Naive thymus-derived CD8-positive, alpha-beta T cell (primary cell): ENCODE measurements at regions of chrX and their contacts with region 1.

Region 1: GRCh38 chrX:48696301-48697181 is at the start of gene SUV39H1:
- DNase-seq: peak; percentile 71 to 90 (median 83)
- ATAC-seq: peak; percentile 92 to 95
- H3K4me3 Mint-ChIP-seq: peak within 1 kb of the TSS; percentile 82 to 98 (median 90)
- H3K27ac Mint-ChIP-seq: peak within 1 kb of the TSS; percentile 94 to 98 (median 97)
- H3K4me1 Mint-ChIP-seq: peaks cover 14 to 29% (median 28%) of the 10 kb centered on the region in 4 donors
- H3K27me3 Mint-ChIP-seq: no peaks in the 10 kb centered on the region
- polyA plus RNA-seq, gene SUV39H1: 9.8 to 13.9 (median 10.2) TPM

Region 2: GRCh38 chrX:48493890-48494364 is 202.6 kb before region 1 on chrX:
- POLR2A ChIA-PET with region 1: no interaction called
- DNase-seq: no peak
- ATAC-seq: no peak
- H3K4me3 Mint-ChIP-seq: no peak overlapping the region
- H3K27ac Mint-ChIP-seq: no peak overlapping the region
- H3K4me1 Mint-ChIP-seq: no peaks in the 10 kb centered on the region
- H3K27me3 Mint-ChIP-seq: no peaks in the 10 kb centered on the region

Region 3: GRCh38 chrX:48648336-48648751 is 48.2 kb before region 1 on chrX:
- POLR2A ChIA-PET with region 1: no interaction called
- DNase-seq: peak in 9 of 10 donors; percentile 2 to 70 (median 30)
- ATAC-seq: peak; percentile 67 to 74
- H3K4me3 Mint-ChIP-seq: no peak overlapping the region
- H3K27ac Mint-ChIP-seq: peak overlapping the region in 3 of 10 donors; percentile 52 to 78 (median 65)
- H3K4me1 Mint-ChIP-seq: peaks cover 2 to 15% (median 7%) of the 10 kb centered on the region in 4 donors
- H3K27me3 Mint-ChIP-seq: no peaks in the 10 kb centered on the region

Region 4: GRCh38 chrX:48665991-48666390 is 30.6 kb before region 1 on chrX:
- POLR2A ChIA-PET with region 1: no interaction called
- DNase-seq: no peak
- ATAC-seq: no peak
- H3K4me3 Mint-ChIP-seq: no peak overlapping the region
- H3K27ac Mint-ChIP-seq: no peak overlapping the region
- H3K4me1 Mint-ChIP-seq: peaks cover 0 to 3% (median 1%) of the 10 kb centered on the region in 4 donors
- H3K27me3 Mint-ChIP-seq: no peaks in the 10 kb centered on the region

Region 5: DNA sequence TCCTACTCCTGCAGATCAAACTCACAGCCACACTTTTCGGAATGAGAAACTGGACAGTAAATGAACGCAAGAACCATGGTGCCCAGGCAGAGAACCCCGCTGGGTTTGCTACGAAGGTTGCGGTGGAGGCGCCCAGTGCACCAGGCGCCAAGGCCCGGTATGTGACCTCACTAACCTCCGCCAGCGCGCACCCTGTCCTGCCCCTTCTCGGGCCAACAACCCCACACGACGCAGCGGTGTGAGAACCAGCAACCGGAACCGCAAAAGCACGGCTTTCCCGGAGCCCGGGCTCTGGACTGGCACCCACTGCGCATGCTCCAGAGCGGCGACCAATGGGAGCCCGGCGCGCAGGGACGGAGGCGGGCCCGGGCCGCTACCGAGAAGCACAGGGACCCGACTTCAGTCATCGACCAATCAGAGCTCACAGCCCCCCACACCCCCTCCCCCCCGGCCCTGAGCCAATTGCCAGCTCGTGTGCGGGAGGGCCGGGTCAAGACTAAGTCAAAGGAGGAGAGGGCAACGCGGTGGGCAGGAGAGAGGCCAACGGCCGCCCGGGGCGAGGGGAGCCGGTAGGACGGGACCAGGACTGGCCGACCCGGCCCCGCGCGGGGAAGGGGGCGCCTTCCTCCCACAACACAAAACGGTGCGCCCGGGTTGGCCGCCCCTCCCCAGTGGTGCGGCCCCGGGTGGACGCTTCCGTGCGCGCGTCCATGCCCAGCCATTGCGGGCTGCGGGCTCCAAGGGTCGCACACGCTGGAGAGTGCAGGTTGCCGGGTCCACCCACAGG is 20.2 kb before region 1 on chrX:
- POLR2A ChIA-PET with region 1: interaction called, 12 read pairs
- DNase-seq: peak; percentile 80 to 93 (median 84)
- ATAC-seq: peak; percentile 95 to 96
- H3K4me3 Mint-ChIP-seq: peak overlapping the region; percentile 85 to 95 (median 92)
- H3K27ac Mint-ChIP-seq: peak overlapping the region; percentile 79 to 97 (median 94)
- H3K4me1 Mint-ChIP-seq: peaks cover 3 to 37% (median 27%) of the 10 kb centered on the region in 4 donors
- H3K27me3 Mint-ChIP-seq: no peaks in the 10 kb centered on the region

Region 6: GRCh38 chrX:48683411-48683982 is 13.0 kb before region 1 on chrX and contains the start of gene WAS:
- POLR2A ChIA-PET with region 1: interaction called, 31 read pairs
- DNase-seq: peak in 9 of 10 donors; percentile 22 to 66 (median 38)
- ATAC-seq: peak; percentile 87 to 88
- H3K4me3 Mint-ChIP-seq: peak within 1 kb of the TSS; percentile 89 to 96 (median 94)
- H3K27ac Mint-ChIP-seq: peak within 1 kb of the TSS; percentile 92 to 97 (median 96)
- H3K4me1 Mint-ChIP-seq: peaks cover 28 to 67% (median 55%) of the 10 kb centered on the region in 4 donors
- H3K27me3 Mint-ChIP-seq: no peaks in the 10 kb centered on the region
- polyA plus RNA-seq, gene WAS: 13.9 to 25.1 (median 19.7) TPM

Region 7: GRCh38 chrX:48715072-48715471 is 18.5 kb after region 1 on chrX:
- POLR2A ChIA-PET with region 1: interaction called, 11 read pairs
- DNase-seq: no peak
- ATAC-seq: peak in 1 of 2 donors; percentile 6
- H3K4me3 Mint-ChIP-seq: peak overlapping the region in 8 of 10 donors; percentile 11 to 75 (median 64)
- H3K27ac Mint-ChIP-seq: peak overlapping the region; percentile 78 to 97 (median 90)
- H3K4me1 Mint-ChIP-seq: peaks cover 66 to 86% (median 85%) of the 10 kb centered on the region in 4 donors
- H3K27me3 Mint-ChIP-seq: no peaks in the 10 kb centered on the region

Region 8: DNA sequence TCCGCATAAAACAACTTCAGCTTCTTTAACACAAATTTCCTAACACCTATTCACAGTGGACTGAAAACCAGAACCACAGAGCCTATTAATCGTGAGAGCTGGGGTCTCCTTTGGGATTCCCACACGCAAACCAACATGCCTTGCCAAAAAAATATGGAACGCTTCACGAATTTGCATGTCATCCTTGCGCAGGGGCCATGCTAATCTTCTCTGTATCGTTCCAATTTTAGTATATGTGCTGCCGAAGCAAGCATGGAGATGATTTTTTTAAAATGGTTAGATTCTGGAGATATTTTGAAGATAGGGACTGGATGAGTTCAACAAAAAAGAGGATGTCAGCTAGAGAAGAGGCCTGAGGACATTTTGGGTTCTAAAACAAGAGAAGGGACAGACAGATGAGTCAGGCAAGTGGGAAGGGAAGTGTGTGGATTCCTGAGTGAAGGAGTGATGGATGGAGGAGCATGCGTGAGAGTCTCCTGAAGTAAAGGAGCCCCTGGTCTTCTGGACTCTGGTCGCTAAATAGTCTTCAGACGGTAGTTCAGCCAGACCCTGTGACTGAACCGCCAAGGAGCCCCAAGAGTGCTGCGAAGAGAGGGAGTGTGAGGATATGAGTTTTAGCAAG is 80.4 kb after region 1 on chrX:
- POLR2A ChIA-PET with region 1: no interaction called
- DNase-seq: no peak
- ATAC-seq: no peak
- H3K4me3 Mint-ChIP-seq: no peak overlapping the region
- H3K27ac Mint-ChIP-seq: no peak overlapping the region
- H3K4me1 Mint-ChIP-seq: no peaks in the 10 kb centered on the region
- H3K27me3 Mint-ChIP-seq: no peaks in the 10 kb centered on the region

Region 9: GRCh38 chrX:48801280-48802088 is 104.9 kb after region 1 on chrX and contains the start of gene HDAC6:
- POLR2A ChIA-PET with region 1: interaction called, 16 read pairs
- DNase-seq: peak; percentile 85 to 97 (median 95)
- ATAC-seq: peak; percentile 87
- H3K4me3 Mint-ChIP-seq: peak within 1 kb of the TSS; percentile 94 to 98 (median 96)
- H3K27ac Mint-ChIP-seq: peak within 1 kb of the TSS; percentile 95 to 99 (median 98)
- H3K4me1 Mint-ChIP-seq: peaks cover 10 to 21% (median 19%) of the 10 kb centered on the region in 4 donors
- H3K27me3 Mint-ChIP-seq: no peaks in the 10 kb centered on the region
- polyA plus RNA-seq, gene HDAC6: 10.5 to 15.9 (median 13.0) TPM